Mammary epithelial cell (primary cell): ENCODE measurements at regions of chr17 and their contacts with region 1.

Region 1: GRCh38 chr17:10646392-10646990 is 10.6 kb downstream of the MYH3 start:
- DNase-seq: peak; percentile 34
- H3K4me3 ChIP-seq: no peak overlapping the region
- H3K27ac ChIP-seq: no peak overlapping the region
- H3K4me1 ChIP-seq: no peaks in the 10 kb centered on the region
- H3K27me3 ChIP-seq: no peaks in the 10 kb centered on the region
- CTCF ChIP-seq: peak; percentile 90

Region 2: DNA sequence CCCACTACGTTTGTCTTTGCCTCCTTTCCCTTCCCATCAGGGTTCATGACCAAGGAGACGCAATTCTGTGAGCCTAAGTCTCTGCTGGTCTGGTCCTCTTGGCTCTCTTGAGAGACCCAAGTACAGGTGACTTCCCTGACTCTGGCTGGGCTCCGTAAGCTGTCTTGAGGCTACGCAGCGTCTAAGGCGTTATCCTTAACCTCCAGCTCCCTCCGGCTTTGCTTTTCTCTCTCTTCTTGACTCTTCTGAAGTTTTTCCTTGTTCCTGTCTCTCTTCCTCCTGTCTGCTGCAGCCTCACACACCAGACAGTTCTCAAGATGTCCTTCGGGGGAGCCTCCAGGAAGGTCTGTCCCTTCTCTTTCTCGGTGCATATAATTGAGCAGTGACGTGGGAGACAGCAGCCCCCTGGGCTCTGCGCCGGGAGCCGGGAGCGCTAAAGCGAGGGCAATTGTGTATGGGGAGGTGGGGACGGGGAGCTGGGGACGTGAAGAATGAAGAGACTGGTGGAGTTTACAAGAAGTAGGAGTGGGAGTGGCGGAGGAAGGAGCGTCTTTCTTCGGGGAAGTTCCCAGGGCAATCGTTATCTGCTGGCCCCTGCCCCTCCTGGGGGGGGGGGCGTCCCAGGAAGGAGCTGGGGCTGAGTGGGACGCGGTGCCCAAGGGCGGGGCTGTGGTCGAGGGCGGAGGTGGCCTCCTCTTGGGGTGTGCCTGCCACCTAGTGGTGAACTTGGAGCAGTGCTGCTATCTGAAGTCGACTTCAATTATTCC is 198.3 kb after region 1 on chr17:
- CTCF ChIA-PET with region 1: no interaction called
- dilution Hi-C with region 1: no loop called
- in situ Hi-C with region 1: no loop called
- intact Hi-C with region 1: loop called (anchors 1 kb)
- DNase-seq: peak; percentile 22
- H3K4me3 ChIP-seq: peak overlapping the region in 2 of 3 experiments; percentile 22 to 47
- H3K27ac ChIP-seq: no peak overlapping the region
- H3K4me1 ChIP-seq: no peaks in the 10 kb centered on the region
- H3K27me3 ChIP-seq: no peaks in the 10 kb centered on the region
- CTCF ChIP-seq: peak; percentile 66 to 82

Region 3: GRCh38 chr17:11935734-11936406 is 1289.4 kb after region 1 on chr17:
- CTCF ChIA-PET with region 1: no interaction called
- dilution Hi-C with region 1: no loop called
- in situ Hi-C with region 1: no loop called
- intact Hi-C with region 1: loop called (anchors 1 kb)
- DNase-seq: peak; percentile 51
- H3K4me3 ChIP-seq: no peak overlapping the region
- H3K27ac ChIP-seq: no peak overlapping the region
- H3K4me1 ChIP-seq: no peaks in the 10 kb centered on the region
- H3K27me3 ChIP-seq: no peaks in the 10 kb centered on the region
- CTCF ChIP-seq: peak; percentile 99